ENCODE measurements at regions of chr14 and their contacts with region 1.

Region 1: DNA sequence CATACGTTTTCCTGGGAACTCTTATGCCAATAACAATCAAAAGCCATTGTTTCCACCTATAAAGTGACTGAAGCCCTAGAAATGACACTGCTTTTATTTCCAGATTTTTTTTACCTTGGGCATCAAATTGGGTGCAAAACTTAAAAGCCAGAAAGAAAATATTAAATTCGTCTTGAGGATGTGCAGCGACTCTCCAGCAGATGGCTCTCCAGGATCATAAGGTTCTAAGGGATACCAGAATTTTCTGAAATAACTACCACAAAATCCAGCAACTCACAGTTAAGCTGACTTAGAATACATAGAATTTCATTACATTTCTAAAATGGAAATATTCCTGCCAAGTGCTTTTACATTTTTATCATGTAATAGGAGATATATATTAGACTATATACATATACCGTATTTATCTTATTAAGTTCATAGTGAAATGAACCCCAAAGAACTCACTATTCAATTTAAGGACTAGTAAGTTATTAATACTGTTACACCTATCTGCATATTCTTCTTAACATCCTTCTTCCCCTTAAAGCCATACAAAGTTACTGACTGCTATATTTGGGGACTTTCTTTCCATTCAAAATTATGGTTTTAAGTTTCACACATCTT is 44.0 kb downstream of the ARMH4 start:
- DNase-seq: peak; percentile 93
- ATAC-seq: 0 out of 2 replicates have a peak, but pooled peaks have one; percentile 6
- H3K4me3 ChIP-seq: no peak overlapping the region
- H3K27ac ChIP-seq: no peak overlapping the region
- H3K4me1 ChIP-seq: peaks cover 45% of the 10 kb centered on the region
- H3K27me3 ChIP-seq: peaks cover 16% of the 10 kb centered on the region; the same call in 1 of the 2 replicates
- CTCF ChIP-seq: peak; percentile 99

Region 2: DNA sequence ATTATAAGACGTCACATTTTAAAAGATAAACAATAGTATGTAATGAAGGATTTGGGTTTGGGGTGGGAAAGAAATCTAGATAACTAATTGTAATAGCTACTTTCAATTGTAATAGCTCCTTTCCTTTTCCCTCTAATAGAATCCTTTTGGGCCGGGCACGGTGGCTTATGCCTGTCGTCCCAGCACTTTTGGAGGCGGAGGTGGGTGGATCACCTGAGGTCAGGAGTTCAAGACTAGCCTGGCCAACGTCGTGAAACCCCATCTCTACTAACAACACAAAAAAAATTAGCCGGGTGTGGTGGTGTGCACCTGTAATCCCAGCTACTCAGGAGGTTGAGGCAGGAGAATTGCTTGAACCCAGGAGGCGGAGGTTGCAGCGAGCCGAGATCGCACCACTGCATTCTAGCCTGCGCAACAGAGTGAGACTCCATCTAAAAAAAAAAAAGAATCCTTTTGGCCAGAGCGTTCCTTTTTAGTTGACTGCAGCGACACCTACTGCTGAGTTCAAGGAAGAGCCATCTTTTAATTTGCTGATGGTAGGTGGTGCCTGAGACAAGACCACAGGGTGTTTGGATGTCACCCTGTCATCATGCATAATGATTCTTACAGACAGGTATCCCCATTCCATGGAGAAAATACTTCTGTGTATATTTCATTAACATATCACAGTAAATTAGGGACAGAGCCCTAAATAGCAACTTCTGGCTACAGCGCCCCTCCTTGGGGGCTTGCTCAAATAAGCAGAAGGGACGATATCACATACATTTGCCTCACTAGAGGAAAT is 35.6 kb before region 1 on chr14:
- CTCF ChIA-PET with region 1: interaction called, 3 read pairs
- POLR2A ChIA-PET with region 1: no interaction called
- intact Hi-C with region 1: loop called (anchors 1 kb)
- DNase-seq: peak; percentile 95
- ATAC-seq: peak; percentile 90
- H3K4me3 ChIP-seq: peak overlapping the region; percentile 18; the same call in 1 of the 2 replicates
- H3K27ac ChIP-seq: no peak overlapping the region
- H3K4me1 ChIP-seq: no peaks in the 10 kb centered on the region
- H3K27me3 ChIP-seq: peaks cover 20% of the 10 kb centered on the region; the same call in 1 of the 2 replicates
- CTCF ChIP-seq: peak; percentile 97

Region 3: GRCh38 chr14:58129212-58129611 is 21.2 kb after region 1 on chr14:
- CTCF ChIA-PET with region 1: no interaction called
- POLR2A ChIA-PET with region 1: no interaction called
- intact Hi-C with region 1: loop called (anchors 2 kb)
- DNase-seq: peak; percentile 46
- ATAC-seq: no peak
- H3K4me3 ChIP-seq: no peak overlapping the region
- H3K27ac ChIP-seq: no peak overlapping the region
- H3K4me1 ChIP-seq: peaks cover 13% of the 10 kb centered on the region
- H3K27me3 ChIP-seq: no peaks in the 10 kb centered on the region
- CTCF ChIP-seq: peak; percentile 81

Region 4: GRCh38 chr14:58171090-58171489 is 63.0 kb after region 1 on chr14:
- CTCF ChIA-PET with region 1: interaction called, 4 read pairs
- POLR2A ChIA-PET with region 1: no interaction called
- intact Hi-C with region 1: loop called (anchors 1 kb)
- DNase-seq: peak; percentile 99
- ATAC-seq: peak; percentile 99
- H3K4me3 ChIP-seq: no peak overlapping the region; the same call in 1 of the 2 replicates
- H3K27ac ChIP-seq: no peak overlapping the region
- H3K4me1 ChIP-seq: peaks cover 16% of the 10 kb centered on the region
- H3K27me3 ChIP-seq: 0 out of 2 replicates have a peak, but pooled peaks cover 7% of the 10 kb centered on the region
- CTCF ChIP-seq: no peak

Region 5: DNA sequence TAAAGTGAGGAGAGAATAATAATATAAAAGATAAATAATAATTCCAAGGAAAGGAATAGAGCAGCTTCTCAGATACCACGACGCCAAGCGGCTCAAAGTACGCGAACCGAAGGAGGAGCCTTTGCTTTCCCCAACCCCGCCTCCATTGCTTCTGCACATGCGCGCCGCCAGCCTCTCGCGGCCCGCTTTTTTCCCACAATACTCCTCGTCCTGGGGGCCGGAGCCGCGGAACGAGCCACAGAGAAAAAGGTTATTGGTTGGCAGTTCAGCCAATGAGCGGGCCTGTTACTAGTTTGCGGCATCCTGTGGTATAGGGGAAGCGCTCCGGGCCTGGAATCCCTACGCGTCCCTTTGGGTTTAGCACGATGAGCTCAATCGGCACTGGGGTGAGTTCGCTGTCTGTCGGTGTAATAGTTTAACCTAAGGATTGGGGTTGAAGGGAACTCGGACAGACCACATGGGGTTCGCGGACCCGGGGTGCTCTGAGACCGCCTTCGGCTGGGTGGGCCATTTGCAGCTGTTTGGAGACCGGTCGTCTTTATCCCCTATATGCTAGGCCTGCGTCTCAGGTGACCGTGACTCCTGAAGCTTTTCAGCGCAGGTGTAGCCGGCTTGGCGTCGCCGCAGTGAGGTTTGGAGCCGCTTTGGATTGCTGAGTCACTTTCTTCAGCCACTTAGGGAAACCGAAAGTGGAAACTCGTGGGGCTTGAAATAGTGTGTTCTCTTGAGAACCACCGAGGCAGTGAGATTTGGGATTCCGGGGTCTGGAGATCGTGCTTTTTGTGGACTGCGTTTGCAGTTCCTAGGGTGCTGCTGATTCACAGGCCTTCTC is 136.7 kb after region 1 on chr14 and contains the start of gene PSMA3:
- CTCF ChIA-PET with region 1: no interaction called
- POLR2A ChIA-PET with region 1: no interaction called
- intact Hi-C with region 1: loop called (anchors 1 kb)
- DNase-seq: peak; percentile 100
- ATAC-seq: peak; percentile 87
- H3K4me3 ChIP-seq: peak within 1 kb of the TSS; percentile 76
- H3K27ac ChIP-seq: peak within 1 kb of the TSS; percentile 87
- H3K4me1 ChIP-seq: peaks cover 25% of the 10 kb centered on the region
- H3K27me3 ChIP-seq: no peaks in the 10 kb centered on the region
- CTCF ChIP-seq: no peak
- total RNA-seq, gene PSMA3: 669 and 700 TPM in 2 replicates

Region 6: GRCh38 chr14:58362798-58363412 is 254.9 kb after region 1 on chr14:
- CTCF ChIA-PET with region 1: no interaction called
- POLR2A ChIA-PET with region 1: no interaction called
- intact Hi-C with region 1: loop called (anchors 1 kb)
- DNase-seq: peak; percentile 85
- ATAC-seq: peak; percentile 100
- H3K4me3 ChIP-seq: no peak overlapping the region
- H3K27ac ChIP-seq: no peak overlapping the region
- H3K4me1 ChIP-seq: no peaks in the 10 kb centered on the region
- H3K27me3 ChIP-seq: no peaks in the 10 kb centered on the region
- CTCF ChIP-seq: peak; percentile 87

Region 7: GRCh38 chr14:58749066-58749669 is 641.1 kb after region 1 on chr14:
- CTCF ChIA-PET with region 1: no interaction called
- POLR2A ChIA-PET with region 1: no interaction called
- intact Hi-C with region 1: loop called (anchors 10 kb)
- DNase-seq: peak; percentile 100
- ATAC-seq: peak; percentile 61
- H3K4me3 ChIP-seq: 0 out of 2 replicates have a peak overlapping the region, but pooled peaks have one; percentile 2
- H3K27ac ChIP-seq: peak overlapping the region; percentile 81
- H3K4me1 ChIP-seq: peaks cover 60% of the 10 kb centered on the region
- H3K27me3 ChIP-seq: no peaks in the 10 kb centered on the region
- CTCF ChIP-seq: no peak

Measured in PC-3 (cell line).